ENCODE measurements at regions of chr10 and their contacts with region 1.

Region 1: GRCh38 chr10:78302989-78303854 is 269.6 kb downstream of the RPS24 start:
- DNase-seq: peak; percentile 100
- ATAC-seq: peak; percentile 91
- H3K4me3 ChIP-seq: peak overlapping the region; percentile 67
- H3K27ac ChIP-seq: peak overlapping the region; percentile 11
- H3K4me1 ChIP-seq: peaks cover 14% of the 10 kb centered on the region
- H3K27me3 ChIP-seq: peaks cover 36% of the 10 kb centered on the region
- CTCF ChIP-seq: peak; percentile 93

Region 2: DNA sequence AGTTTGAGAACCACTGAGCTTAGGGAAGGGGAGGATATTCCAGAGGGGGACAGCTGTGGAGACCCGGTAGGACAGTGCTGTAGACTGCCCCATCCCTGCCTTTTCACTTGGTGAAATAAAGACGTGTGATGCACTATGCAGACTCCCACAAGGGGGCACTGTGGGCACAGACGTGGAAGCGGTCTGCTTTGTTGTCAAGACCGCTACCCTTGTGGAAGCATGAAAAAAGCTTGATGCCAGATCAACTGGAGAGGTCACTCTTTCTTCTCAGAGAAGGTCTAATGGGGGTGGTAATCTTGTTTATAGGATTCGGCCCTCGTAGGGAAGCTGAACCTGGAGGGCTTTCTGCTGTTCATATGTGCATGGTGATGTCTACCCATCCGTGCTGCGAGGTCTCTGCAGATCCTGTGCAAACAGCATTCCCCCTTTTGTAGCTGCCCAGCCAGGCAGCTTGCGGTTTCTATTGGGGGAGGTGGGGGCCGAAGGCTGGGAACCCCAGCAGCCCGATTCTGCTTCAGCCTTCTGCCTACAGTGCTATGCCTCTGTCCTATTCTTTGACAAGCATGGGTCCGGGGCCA is 255.8 kb before region 1 on chr10:
- CTCF ChIA-PET with region 1: interaction called, 6 read pairs
- POLR2A ChIA-PET with region 1: no interaction called
- intact Hi-C with region 1: loop called (anchors 1 kb)
- DNase-seq: peak; percentile 100
- ATAC-seq: peak; percentile 75
- H3K4me3 ChIP-seq: no peak overlapping the region
- H3K27ac ChIP-seq: no peak overlapping the region
- H3K4me1 ChIP-seq: no peaks in the 10 kb centered on the region
- H3K27me3 ChIP-seq: no peaks in the 10 kb centered on the region
- CTCF ChIP-seq: peak; percentile 100

Region 3: DNA sequence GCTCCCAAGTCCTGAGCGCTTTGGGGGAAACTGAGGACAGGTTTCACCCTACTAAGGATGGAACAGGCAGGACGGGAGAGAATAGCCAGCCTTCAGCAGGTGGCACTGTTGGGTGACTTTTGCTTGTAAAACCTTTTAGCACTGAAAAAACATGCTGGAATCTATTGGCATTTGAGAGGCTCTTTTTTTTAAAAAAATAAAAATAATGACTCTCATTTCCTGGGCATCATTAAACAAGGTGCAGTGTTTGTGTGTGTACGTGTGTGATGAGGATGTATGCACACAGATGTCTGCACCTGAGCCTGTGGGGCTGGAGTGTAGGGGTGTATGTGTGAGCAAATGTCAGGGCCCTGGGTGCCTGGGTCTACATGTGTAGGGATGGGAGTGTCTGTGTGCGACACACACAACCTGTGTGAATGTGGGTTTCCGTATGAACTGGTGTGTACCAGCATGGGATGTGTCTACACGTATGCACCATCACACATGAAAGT is 91.6 kb before region 1 on chr10:
- CTCF ChIA-PET with region 1: no interaction called
- POLR2A ChIA-PET with region 1: no interaction called
- intact Hi-C with region 1: loop called (anchors 1 kb)
- DNase-seq: peak; percentile 92
- ATAC-seq: peak; percentile 66
- H3K4me3 ChIP-seq: no peak overlapping the region
- H3K27ac ChIP-seq: no peak overlapping the region
- H3K4me1 ChIP-seq: no peaks in the 10 kb centered on the region
- H3K27me3 ChIP-seq: peaks cover 69% of the 10 kb centered on the region
- CTCF ChIP-seq: peak; percentile 100

Region 4: GRCh38 chr10:78231939-78232338 is 71.3 kb before region 1 on chr10:
- CTCF ChIA-PET with region 1: interaction called, 7 read pairs
- POLR2A ChIA-PET with region 1: no interaction called
- intact Hi-C with region 1: loop called (anchors 1 kb)
- DNase-seq: peak; percentile 79
- ATAC-seq: peak; percentile 71
- H3K4me3 ChIP-seq: no peak overlapping the region
- H3K27ac ChIP-seq: no peak overlapping the region
- H3K4me1 ChIP-seq: no peaks in the 10 kb centered on the region
- H3K27me3 ChIP-seq: peaks cover 71% of the 10 kb centered on the region
- CTCF ChIP-seq: peak; percentile 96

Region 5: DNA sequence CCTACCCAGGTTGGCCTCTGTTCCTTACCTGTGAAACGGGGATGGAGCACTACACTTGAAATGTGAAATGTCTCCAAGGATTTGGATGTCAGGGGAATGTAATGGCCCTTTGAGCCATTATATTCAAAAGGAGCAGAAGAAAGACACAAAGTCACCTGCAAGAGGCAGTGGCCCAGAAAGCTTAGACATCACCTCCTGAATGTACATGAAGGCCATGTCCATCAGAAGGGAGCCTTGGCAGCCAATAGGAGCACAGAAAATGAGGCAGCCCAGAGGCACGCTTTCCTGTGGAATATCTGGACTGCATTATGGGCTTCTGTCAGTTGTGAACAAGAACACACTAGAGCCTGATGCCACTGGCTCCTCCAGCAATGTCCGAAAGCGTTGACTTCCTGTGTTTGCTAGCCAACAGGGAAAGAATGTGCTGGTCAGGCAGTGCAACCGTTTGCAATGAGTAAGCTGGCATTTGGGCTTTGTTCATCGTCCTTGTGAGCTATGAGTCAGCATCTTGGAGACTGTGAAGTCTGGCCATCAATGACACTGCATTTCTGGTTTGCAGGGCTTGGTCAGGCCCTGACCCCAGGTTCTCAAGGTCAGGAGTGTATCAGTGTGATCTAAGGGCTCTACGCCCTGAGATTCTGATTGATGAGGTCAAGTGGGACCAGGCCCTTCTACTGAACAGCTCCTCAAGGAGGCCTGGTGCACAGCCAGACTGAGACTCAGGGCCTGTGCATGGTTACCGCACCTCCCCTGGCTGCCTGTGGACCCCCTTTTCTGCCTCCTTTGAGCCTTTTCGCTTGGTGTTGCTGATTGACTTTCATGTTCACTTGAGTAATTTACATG is 47.2 kb before region 1 on chr10:
- CTCF ChIA-PET with region 1: interaction called, 3 read pairs
- POLR2A ChIA-PET with region 1: interaction called, 5 read pairs
- intact Hi-C with region 1: loop called (anchors 1 kb)
- DNase-seq: peak; percentile 100
- ATAC-seq: peak; percentile 97
- H3K4me3 ChIP-seq: no peak overlapping the region
- H3K27ac ChIP-seq: peak overlapping the region; percentile 73
- H3K4me1 ChIP-seq: peaks cover 20% of the 10 kb centered on the region
- H3K27me3 ChIP-seq: no peaks in the 10 kb centered on the region
- CTCF ChIP-seq: no peak

Region 6: GRCh38 chr10:78416111-78417011 is 113.1 kb after region 1 on chr10:
- CTCF ChIA-PET with region 1: no interaction called
- POLR2A ChIA-PET with region 1: no interaction called
- intact Hi-C with region 1: loop called (anchors 5 kb)
- DNase-seq: peak; percentile 98
- ATAC-seq: peak; percentile 89
- H3K4me3 ChIP-seq: no peak overlapping the region
- H3K27ac ChIP-seq: peak overlapping the region; percentile 70
- H3K4me1 ChIP-seq: peaks cover 22% of the 10 kb centered on the region
- H3K27me3 ChIP-seq: no peaks in the 10 kb centered on the region
- CTCF ChIP-seq: no peak

Region 7: GRCh38 chr10:78458983-78459638 is 155.9 kb after region 1 on chr10:
- CTCF ChIA-PET with region 1: no interaction called
- POLR2A ChIA-PET with region 1: no interaction called
- intact Hi-C with region 1: loop called (anchors 1 kb)
- DNase-seq: peak; percentile 100
- ATAC-seq: peak; percentile 91
- H3K4me3 ChIP-seq: peak overlapping the region; percentile 6; the same call in 1 of the 2 replicates
- H3K27ac ChIP-seq: peak overlapping the region; percentile 85
- H3K4me1 ChIP-seq: peaks cover 57% of the 10 kb centered on the region
- H3K27me3 ChIP-seq: no peaks in the 10 kb centered on the region
- CTCF ChIP-seq: no peak

Region 8: DNA sequence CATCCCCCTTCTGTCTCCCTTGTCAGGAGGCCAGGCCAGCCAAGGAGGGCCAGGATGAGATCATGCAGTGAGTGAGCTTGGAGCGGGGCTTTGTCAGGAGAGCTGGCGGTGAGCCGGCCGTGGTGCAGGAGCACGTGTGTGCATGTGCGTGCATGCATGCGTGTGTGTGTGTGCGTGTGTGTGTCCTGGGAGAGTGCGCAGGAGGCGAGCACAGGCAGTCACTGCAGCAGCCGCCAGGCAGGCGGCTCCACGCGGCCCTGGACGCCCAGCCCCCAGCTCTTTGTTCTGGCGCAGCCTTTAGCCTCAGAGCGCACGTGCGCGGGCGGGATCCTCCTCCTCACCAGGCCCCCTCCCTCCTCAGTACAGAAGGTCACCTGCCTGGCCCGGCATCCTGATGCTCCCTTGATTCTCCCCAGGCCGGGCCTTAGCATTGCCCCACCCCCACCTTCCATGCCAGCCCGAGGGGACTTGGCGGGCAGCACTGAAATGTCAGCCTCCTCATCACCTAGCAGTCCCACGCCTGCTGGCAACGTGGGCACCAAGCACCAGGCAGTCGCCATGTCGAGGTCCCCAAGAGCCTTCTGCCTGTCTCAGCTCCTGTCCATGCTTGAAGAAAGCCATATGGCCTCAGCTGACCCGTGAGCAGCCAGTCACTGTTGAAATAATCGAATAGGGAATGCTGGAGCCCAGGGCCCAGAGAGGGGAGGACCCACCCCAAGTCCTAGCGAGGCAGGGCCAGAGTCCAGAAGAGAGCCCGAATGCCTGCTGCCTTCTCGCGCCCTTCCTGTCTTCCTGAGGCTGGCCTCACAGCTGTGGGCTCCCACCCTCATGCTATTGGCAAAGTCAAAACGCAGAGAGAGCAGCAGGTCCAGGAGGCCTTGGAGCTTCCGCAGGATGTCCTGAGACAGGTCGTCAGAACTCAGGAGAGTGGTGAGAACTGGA is 918.2 kb after region 1 on chr10:
- CTCF ChIA-PET with region 1: no interaction called
- POLR2A ChIA-PET with region 1: no interaction called
- intact Hi-C with region 1: no loop called
- DNase-seq: no peak
- ATAC-seq: no peak
- H3K4me3 ChIP-seq: no peak overlapping the region
- H3K27ac ChIP-seq: no peak overlapping the region
- H3K4me1 ChIP-seq: no peaks in the 10 kb centered on the region
- H3K27me3 ChIP-seq: no peaks in the 10 kb centered on the region
- CTCF ChIP-seq: no peak

Measured in PC-3 (cell line).